RWPE1 (cell line): ENCODE measurements at regions of chr2 and their contacts with region 1.

Region 1: DNA sequence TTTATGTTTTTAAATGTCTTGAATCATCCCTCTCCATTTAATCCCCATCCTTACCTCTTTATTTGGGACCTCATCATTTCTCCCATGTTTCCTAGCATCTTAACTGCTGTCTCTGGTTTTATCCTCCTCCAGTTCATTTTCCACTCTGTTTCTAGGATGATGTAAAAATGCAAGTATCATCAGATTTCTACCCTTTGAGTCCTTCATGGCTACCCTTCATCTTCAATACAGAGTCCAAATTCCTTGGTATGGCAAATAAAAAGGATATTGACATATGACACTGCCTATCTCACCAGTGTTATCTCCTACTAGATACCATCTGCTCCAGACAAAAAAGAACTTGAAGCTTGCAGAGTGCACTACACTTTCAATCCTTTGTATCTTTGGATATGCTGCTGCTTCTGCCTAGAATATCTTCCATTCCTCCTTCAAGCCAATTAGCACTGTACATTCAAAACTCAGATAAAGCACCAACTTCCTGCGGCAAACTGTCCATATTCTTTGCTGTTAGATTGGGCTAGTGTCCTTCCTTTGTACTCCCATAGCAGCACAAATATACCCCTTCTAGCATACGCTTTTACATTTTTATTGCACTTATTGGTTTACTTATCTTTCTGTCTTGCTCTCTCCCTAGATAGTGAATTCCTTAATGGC is 24.6 kb upstream of the TLK1 start:
- DNase-seq: no peak
- H3K27ac ChIP-seq: no peak overlapping the region
- CTCF ChIP-seq: no peak

Region 2: DNA sequence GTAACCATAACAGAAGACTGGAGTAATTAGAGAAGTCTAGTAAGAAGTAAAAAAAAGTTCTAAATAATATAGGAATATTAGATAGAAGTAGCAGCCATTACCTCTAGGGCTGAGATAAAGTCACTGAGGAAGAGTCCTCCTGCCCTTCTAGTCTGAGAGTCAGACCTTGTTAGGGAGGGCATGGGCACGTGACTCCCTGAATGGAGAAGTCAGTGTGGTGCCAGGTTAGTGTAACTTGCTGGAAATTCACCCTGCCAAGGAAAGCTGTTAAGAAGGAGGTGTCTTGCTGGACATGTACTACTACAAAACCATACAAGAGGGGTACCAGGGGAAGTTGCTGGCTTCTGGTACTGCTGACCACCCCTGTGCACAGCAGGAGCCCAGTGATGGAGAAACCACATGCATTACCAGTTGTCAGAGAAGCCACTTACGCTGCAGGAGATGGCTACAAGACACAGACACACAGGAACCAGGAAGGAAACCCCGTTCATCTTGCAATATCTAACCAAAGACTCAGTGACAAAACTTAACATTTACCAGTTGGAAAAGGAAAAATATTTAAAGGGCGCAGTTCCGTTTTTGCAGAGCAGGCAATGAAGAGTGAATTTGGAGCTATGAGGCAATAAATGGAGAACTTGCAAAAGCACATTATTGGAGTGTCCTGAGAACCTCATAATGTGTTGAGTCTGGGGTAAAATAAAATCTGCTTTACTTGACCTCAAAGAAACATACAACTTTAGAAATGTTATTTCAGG is 52.6 kb after region 1 on chr2:
- CTCF ChIA-PET with region 1: no interaction called
- POLR2A ChIA-PET with region 1: interaction called, 12 read pairs
- DNase-seq: no peak
- H3K27ac ChIP-seq: no peak overlapping the region
- CTCF ChIP-seq: no peak